PC-9 (cell line): ENCODE measurements at regions of chr9 and their contacts with region 1.

Region 1: GRCh38 chr9:112717661-112718341 is at the start of gene INIP:
- DNase-seq: peak; percentile 93 to 99
- H3K4me3 ChIP-seq: peak within 1 kb of the TSS; percentile 77
- H3K27ac ChIP-seq: peak within 1 kb of the TSS; percentile 48
- H3K4me1 ChIP-seq: peaks cover 16% of the 10 kb centered on the region; the same call in 1 of the 2 replicates
- H3K27me3 ChIP-seq: no peaks in the 10 kb centered on the region
- CTCF ChIP-seq: no peak; the same call in 1 of the 2 replicates
- total RNA-seq, gene INIP: 24.0 and 28.0 TPM in 2 replicates

Region 2: DNA sequence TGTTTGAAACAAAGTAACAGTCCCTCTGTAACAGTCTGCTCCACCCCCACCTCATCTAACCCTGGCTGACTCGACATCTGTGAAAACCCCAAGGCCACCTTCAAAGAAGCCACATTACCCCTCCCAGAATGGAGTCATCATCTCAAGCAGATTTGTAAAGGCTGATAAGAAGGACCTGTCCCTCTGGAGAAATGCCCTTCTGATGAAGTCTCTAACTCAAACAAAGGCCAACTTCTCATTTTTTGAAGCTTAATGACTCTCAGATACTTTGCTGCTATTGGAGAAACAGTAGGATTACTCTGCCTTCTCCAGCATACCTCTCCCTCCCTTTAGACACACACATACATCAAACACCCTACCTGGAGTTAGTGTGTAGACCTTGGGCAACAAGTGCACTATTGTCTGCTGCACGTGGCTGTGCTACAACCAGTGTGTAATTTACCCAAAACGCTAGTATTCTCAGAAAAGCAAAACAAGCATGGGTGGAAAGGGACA is 537.4 kb before region 1 on chr9:
- CTCF ChIA-PET with region 1: no interaction called
- POLR2A ChIA-PET with region 1: no interaction called
- intact Hi-C with region 1: no loop called
- DNase-seq: peak; percentile 32 to 85
- H3K4me3 ChIP-seq: no peak overlapping the region
- H3K27ac ChIP-seq: peak overlapping the region; percentile 55
- H3K4me1 ChIP-seq: peaks cover 35% of the 10 kb centered on the region
- H3K27me3 ChIP-seq: no peaks in the 10 kb centered on the region
- CTCF ChIP-seq: no peak

Region 3: GRCh38 chr9:112379177-112380101 is 338.4 kb before region 1 on chr9:
- CTCF ChIA-PET with region 1: no interaction called
- POLR2A ChIA-PET with region 1: no interaction called
- intact Hi-C with region 1: loop called (anchors 10 kb)
- DNase-seq: peak; percentile 92 to 100
- H3K4me3 ChIP-seq: peak overlapping the region; percentile 95
- H3K27ac ChIP-seq: peak overlapping the region; percentile 75
- H3K4me1 ChIP-seq: peaks cover 28% of the 10 kb centered on the region
- H3K27me3 ChIP-seq: no peaks in the 10 kb centered on the region
- CTCF ChIP-seq: no peak

Region 4: DNA sequence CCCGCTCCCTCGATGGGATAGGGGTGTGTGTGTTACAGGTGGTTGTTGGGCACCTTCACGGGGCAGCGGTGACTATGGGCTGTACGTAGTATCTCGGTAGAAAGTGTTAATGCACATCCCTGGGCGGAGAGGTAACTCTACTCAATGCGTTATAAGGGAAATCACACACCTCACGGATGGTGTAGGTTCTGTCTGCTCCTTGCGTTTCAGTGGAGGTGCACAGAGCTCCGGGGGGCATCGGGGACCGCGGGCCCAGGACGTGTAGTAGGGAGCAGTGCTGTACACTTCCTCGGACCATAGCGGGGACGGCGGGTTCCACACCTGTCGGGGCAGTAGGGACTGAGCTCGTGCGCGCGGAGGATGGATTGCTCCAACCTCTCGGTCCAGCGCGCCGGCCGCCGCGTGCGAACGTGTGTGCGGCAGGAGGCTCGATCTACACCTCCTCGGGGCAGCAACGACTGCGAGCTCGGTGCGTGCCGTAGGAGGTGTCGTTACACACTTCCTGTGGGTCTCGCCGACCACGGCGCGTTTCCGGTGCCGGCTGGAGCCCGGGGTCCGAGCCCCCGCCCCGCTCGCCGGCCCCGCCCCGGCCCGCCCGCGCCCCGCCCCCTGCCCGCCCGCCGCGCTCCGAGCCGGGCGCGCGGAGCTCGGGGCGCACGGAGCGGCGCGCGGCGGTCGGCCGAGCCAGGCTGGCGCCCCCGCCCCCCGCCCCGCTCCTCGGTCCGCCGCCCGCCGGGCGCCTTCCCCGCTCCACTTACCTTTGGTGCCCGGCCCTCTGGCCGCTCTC is 231.4 kb before region 1 on chr9 and contains the start of gene KIAA1958:
- CTCF ChIA-PET with region 1: no interaction called
- POLR2A ChIA-PET with region 1: interaction called, 3 read pairs
- intact Hi-C with region 1: loop called (anchors 1 kb)
- DNase-seq: peak; percentile 71 to 89
- H3K4me3 ChIP-seq: peak within 1 kb of the TSS; percentile 81
- H3K27ac ChIP-seq: 0 out of 2 replicates have a peak within 1 kb of the TSS, but pooled peaks have one; percentile 17
- H3K4me1 ChIP-seq: peaks cover 21% of the 10 kb centered on the region
- H3K27me3 ChIP-seq: no peaks in the 10 kb centered on the region
- CTCF ChIP-seq: no peak
- total RNA-seq, gene KIAA1958: 19.5 and 19.8 TPM in 2 replicates

Region 5: GRCh38 chr9:112620388-112620787 is 97.4 kb before region 1 on chr9:
- CTCF ChIA-PET with region 1: no interaction called
- POLR2A ChIA-PET with region 1: no interaction called
- intact Hi-C with region 1: no loop called
- DNase-seq: no peak
- H3K4me3 ChIP-seq: no peak overlapping the region
- H3K27ac ChIP-seq: no peak overlapping the region
- H3K4me1 ChIP-seq: no peaks in the 10 kb centered on the region
- H3K27me3 ChIP-seq: no peaks in the 10 kb centered on the region
- CTCF ChIP-seq: no peak

Region 6: DNA sequence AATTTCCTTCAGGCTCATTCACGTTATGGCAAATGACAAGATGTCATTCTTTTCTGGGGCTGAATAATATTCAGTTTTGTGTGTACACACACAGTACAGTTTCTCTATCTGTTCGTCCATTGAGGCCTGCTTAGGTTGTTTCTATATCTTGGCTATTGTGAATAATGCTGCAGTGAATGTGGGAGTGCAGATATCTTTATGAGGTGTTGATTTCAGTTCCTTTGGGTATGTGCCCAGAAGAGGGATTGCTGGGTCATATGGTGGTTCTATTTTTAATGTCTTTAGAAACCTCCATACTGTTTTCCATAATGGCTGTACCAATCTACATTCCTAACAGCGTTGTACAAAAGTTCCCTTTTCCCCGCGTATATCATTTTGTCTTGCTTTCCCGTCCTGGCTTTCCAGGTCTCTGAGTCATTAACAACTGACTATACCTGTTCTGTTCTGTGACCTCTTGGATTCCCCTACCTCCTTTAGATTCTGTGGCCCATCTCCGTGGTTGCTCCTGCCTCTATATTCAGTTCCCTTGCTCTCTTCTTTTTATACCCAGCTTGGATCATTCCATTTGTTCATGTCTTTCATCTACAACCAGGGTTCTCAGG is 39.6 kb after region 1 on chr9:
- CTCF ChIA-PET with region 1: no interaction called
- POLR2A ChIA-PET with region 1: interaction called, 3 read pairs
- intact Hi-C with region 1: loop called (anchors 1 kb)
- DNase-seq: peak; percentile 39 to 69
- H3K4me3 ChIP-seq: peak overlapping the region; percentile 17; the same call in 1 of the 2 replicates
- H3K27ac ChIP-seq: peak overlapping the region; percentile 58
- H3K4me1 ChIP-seq: peaks cover 59% of the 10 kb centered on the region
- H3K27me3 ChIP-seq: no peaks in the 10 kb centered on the region
- CTCF ChIP-seq: no peak

Region 7: GRCh38 chr9:112793213-112793810 is 75.5 kb after region 1 on chr9:
- CTCF ChIA-PET with region 1: interaction called, 5 read pairs
- POLR2A ChIA-PET with region 1: no interaction called
- intact Hi-C with region 1: loop called (anchors 1 kb)
- DNase-seq: peak in 1 of 2 experiments; percentile 71
- H3K4me3 ChIP-seq: no peak overlapping the region
- H3K27ac ChIP-seq: no peak overlapping the region
- H3K4me1 ChIP-seq: no peaks in the 10 kb centered on the region
- H3K27me3 ChIP-seq: no peaks in the 10 kb centered on the region
- CTCF ChIP-seq: peak; percentile 78

Region 8: DNA sequence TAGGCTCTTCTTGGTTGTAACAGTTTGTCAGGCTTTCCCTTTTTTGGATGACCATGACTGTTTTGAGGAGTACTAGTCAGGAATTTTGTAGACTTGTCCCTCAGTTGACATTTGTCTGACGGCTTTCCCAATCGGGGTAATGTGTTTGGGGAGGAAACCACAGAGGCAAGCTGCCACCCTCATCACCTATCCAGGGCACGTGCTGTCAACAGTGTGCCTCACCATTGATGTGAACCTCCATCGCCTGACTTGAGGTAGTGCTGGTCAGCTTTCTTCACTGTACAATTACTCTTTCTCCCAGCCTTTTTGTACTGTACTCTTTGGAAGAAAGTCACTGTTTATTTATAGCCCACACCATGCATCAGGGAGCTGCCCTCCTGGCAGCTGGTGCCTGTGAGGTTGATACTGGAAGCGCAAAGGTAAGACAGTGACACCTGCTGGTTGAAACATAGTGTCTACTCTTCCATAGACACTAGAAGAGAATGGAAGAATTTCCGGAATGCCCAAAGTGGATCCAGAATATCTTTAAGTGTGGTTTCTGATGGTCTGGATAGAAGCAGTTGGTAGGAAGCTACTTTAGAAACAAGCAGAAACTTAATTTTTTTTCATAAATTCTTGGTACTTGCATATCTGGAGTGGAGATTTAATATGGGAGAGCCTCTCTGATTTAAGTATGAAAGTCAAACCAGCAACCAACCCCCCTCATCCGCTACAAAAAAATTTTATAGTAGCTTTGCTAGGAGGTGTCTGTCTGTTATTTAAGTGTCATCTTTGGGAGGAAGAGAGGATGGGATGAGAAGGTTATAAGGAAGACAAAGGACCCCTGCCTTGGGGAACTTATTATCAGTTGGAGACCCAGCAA is 102.1 kb after region 1 on chr9:
- CTCF ChIA-PET with region 1: no interaction called
- POLR2A ChIA-PET with region 1: no interaction called
- intact Hi-C with region 1: loop called (anchors 5 kb)
- DNase-seq: peak; percentile 20 to 65
- H3K4me3 ChIP-seq: no peak overlapping the region
- H3K27ac ChIP-seq: no peak overlapping the region
- H3K4me1 ChIP-seq: no peaks in the 10 kb centered on the region
- H3K27me3 ChIP-seq: no peaks in the 10 kb centered on the region
- CTCF ChIP-seq: peak; percentile 80

Region 9: GRCh38 chr9:113042884-113043657 is 325.3 kb after region 1 on chr9:
- CTCF ChIA-PET with region 1: no interaction called
- POLR2A ChIA-PET with region 1: no interaction called
- intact Hi-C with region 1: no loop called
- DNase-seq: no peak
- H3K4me3 ChIP-seq: no peak overlapping the region
- H3K27ac ChIP-seq: no peak overlapping the region
- H3K4me1 ChIP-seq: no peaks in the 10 kb centered on the region
- H3K27me3 ChIP-seq: no peaks in the 10 kb centered on the region
- CTCF ChIP-seq: no peak

Region 10: GRCh38 chr9:113095561-113095960 is 377.8 kb after region 1 on chr9:
- CTCF ChIA-PET with region 1: no interaction called
- POLR2A ChIA-PET with region 1: interaction called, 25 read pairs
- intact Hi-C with region 1: no loop called
- DNase-seq: no peak
- H3K4me3 ChIP-seq: no peak overlapping the region
- H3K27ac ChIP-seq: no peak overlapping the region
- H3K4me1 ChIP-seq: no peaks in the 10 kb centered on the region
- H3K27me3 ChIP-seq: 0 out of 2 replicates have a peak, but pooled peaks cover 6% of the 10 kb centered on the region
- CTCF ChIP-seq: no peak